ENCODE measurements at regions of chr1 and their contacts with region 1.

Region 1: DNA sequence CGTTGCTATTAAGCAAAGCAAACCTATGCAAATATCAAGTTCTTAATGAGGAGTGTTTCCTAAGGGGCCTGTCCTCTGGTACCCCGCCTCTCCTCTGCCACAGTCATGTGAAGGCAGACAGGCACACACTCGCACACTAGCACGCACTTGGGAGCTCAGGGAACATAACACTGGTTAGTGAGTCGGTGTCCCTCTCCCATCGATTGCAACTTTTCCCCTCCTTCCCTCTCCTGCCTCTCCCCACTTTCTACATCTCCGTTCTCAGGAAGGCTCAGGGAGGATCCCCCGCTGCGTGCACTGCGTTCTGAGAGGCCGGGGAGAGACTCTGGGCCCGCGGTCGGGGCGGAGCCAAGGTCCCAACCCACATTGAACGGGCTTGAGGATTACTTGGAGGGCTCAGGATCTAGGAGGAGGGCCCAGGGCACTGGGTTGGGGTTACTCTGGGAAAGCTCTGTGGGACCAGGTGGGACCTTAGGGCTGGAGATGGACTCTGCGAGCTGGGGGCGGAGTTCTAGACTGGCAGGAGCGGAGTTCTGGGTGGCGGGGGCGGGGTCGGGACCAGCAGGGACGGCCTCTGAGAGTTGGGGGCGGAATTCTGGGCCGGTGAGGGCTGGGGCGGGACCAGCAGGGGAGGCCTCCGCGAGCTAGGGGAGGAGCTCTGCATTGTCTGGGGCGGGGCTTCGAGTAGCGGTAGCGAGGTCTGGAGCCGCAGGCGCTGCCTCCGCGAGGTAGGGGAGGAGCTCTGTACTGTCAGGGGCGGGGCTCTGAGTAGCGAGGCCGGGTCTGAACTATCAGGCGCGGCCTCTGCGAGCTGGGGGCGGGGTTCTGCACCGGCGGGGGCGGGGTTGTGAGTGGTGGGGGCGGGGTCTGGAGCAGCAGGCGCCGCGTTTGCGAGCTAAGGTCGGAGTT is 533 bp upstream of the LEPR start:
- DNase-seq: peak; percentile 98 to 99 (median 99)
- ATAC-seq: peak; percentile 97 to 99 (median 98)
- H3K4me3 ChIP-seq: peak overlapping the region; percentile 36 to 98 (median 80)
- H3K27ac ChIP-seq: peak overlapping the region; percentile 92 to 99 (median 97)
- H3K4me1 ChIP-seq: peaks cover 0 to 45% (median 27%) of the 10 kb centered on the region in 12 donors
- H3K27me3 ChIP-seq: no peaks in the 10 kb centered on the region
- CTCF ChIP-seq: no peak
- POLR2A ChIP-seq: peak in 1 of 2 donors; percentile 38

Region 2: DNA sequence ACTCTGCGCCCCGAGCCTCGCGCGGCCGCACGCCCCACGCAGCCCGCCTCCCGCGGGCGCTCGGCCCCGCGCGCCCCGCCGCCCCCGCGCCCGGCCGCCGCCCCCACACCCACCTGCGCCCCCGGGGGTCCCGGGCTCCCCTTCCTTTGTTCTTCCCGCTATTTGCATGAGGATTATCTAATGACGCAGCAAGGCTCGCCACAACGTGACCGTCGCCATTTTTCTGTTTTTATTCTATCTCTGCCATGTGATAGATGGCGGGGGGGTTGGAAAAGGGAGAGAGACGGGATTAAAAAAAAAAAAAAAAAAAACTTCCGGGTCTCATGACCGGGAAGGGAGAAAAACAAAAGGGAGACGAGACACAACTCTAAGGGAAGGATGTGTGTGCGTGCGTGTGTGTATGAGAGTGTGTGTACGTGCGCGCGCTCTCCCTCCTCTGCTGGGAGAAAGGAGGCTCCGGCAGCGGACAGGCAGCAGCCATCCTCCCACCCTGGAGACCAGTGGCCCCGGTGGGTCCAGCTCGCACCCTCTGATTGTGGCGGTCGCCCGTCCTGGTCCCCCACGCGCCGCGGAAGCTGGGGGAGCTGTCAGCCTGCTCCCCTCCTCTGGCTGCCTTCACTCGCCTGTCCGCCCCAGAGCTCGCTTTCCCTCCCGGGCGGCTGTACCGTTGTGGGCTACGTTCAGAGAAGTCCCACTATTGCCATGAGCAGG is 352.3 kb before region 1 on chr1:
- intact Hi-C with region 1: loop called in 7 of 10 experiments (anchors 5 to 10 kb)
- DNase-seq: peak; percentile 72 to 85 (median 81)
- ATAC-seq: peak; percentile 45 to 63 (median 58)
- H3K4me3 ChIP-seq: peak overlapping the region; percentile 71 to 98 (median 88)
- H3K27ac ChIP-seq: peak overlapping the region; percentile 95 to 100 (median 99)
- H3K4me1 ChIP-seq: peaks cover 0 to 43% (median 31%) of the 10 kb centered on the region in 12 donors
- H3K27me3 ChIP-seq: no peaks in the 10 kb centered on the region
- CTCF ChIP-seq: no peak
- POLR2A ChIP-seq: peak in 1 of 2 donors; percentile 65

Region 3: GRCh38 chr1:65235867-65236805 is 183.8 kb before region 1 on chr1:
- intact Hi-C with region 1: loop called in 1 of 10 experiments (anchors 10 kb)
- DNase-seq: no peak
- ATAC-seq: no peak
- H3K4me3 ChIP-seq: no peak overlapping the region
- H3K27ac ChIP-seq: no peak overlapping the region
- H3K4me1 ChIP-seq: peaks cover 0 to 12% (median 0%) of the 10 kb centered on the region in 12 donors
- H3K27me3 ChIP-seq: no peaks in the 10 kb centered on the region
- CTCF ChIP-seq: peak; percentile 42 to 70 (median 57)
- POLR2A ChIP-seq: no peak

Region 4: DNA sequence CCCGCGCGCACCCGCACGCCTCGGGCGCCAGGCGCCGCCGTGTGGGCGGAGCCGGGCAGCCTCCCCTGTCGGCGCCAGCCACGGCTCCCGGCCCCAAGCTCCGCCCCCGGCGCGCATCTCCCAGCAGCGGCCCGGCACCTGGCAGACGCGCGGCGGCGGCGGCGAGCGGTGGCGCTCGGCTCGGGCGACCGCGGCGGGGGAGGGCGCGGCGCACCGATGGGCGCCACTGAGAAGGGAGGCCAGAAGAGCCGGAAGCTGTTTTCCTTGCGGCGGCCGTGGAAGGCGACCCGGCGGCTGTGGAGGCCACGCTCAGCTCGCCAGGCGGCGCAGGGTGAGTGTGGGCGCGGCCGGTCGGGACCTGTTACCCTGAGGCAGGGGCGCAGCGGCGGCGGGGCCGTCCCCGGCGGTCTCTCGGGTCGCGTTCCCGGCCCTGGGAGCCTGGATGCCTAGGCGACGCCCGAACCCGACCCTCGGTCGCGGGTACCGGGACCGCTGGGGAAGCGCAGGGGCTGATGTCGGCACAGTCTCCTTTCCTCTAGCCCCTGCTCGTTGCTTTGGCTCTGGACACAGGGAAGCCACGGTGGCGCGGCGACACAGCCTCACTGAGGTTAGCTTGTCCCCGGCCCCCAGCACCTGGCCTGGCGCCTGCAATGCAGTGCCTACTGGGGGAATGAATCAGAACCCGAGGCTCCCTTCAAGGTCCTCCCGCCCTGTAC is 165.5 kb before region 1 on chr1:
- intact Hi-C with region 1: loop called in 5 of 10 experiments (anchors 5 to 10 kb)
- DNase-seq: peak; percentile 75 to 90 (median 83)
- ATAC-seq: peak; percentile 63 to 97 (median 92)
- H3K4me3 ChIP-seq: peak overlapping the region; percentile 69 to 99 (median 80)
- H3K27ac ChIP-seq: peak overlapping the region in 9 of 12 donors; percentile 24 to 82 (median 65)
- H3K4me1 ChIP-seq: peaks cover 0 to 28% (median 10%) of the 10 kb centered on the region in 12 donors
- H3K27me3 ChIP-seq: peaks cover 0 to 15% (median 0%) of the 10 kb centered on the region in 9 donors
- CTCF ChIP-seq: peak in 6 of 12 donors; percentile 18 to 50 (median 27)
- POLR2A ChIP-seq: no peak

Region 5: DNA sequence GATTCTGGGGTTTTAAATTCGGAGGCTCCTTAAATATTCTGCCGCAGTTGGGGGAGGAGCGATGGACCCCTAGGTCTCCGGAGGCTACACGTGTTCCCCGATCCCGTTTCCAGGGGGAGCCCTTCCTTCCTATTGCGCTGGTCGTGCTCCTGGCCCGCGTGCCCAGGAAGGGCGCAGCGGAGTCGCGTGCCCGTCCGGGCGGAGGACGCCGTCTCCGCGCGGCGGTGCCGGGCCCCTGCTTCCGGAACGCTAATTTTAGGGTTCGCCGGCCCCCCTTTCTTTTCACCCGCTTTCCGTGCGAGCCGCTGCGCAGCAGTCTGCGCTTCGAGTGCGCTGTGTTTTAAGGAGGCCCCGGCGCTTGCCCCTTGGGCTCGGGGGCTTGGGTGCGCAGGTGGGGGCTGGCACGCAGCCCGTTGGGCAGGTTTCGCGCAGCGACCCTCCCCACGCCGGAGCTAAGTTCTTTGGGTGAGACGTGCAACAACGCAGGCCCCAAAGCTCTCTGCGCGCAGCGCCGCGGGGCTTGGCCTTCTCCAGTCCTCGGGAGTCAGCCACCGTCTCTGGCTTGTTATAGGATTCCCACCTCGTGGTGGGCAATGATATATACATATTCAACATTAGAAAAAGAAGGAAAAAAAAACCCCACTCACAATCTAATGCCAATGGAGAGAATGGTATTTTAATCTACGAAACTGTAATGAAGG is 154.1 kb before region 1 on chr1:
- intact Hi-C with region 1: loop called in 2 of 10 experiments (anchors 10 kb)
- DNase-seq: peak; percentile 43 to 66 (median 55)
- ATAC-seq: peak; percentile 75 to 96 (median 93)
- H3K4me3 ChIP-seq: peak overlapping the region; percentile 39 to 74 (median 61)
- H3K27ac ChIP-seq: peak overlapping the region in 10 of 12 donors; percentile 22 to 78 (median 58)
- H3K4me1 ChIP-seq: peaks cover 0 to 23% (median 11%) of the 10 kb centered on the region in 12 donors
- H3K27me3 ChIP-seq: peaks cover 0 to 20% (median 0%) of the 10 kb centered on the region in 9 donors
- CTCF ChIP-seq: peak in 11 of 12 donors; percentile 8 to 52 (median 27)
- POLR2A ChIP-seq: no peak

Region 6: DNA sequence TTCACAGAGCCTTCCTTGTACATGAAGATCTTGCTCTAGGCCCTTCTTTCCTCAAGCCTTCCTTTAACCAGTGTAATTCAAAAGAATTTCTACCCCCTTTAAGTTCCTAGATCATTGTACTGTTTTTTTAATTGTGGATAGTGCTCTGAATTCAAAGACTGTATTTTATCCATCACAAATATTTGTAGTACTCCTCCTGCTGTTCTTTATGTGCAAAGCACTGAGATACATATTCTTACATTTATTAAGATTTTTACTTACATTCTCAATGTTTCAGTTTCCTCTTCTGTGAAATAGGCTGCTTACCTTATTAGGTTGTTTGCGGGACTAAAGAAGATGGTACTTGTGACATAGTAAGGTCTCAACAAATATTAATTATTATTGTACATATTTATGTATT is 204.0 kb after region 1 on chr1:
- intact Hi-C with region 1: no loop called
- DNase-seq: no peak
- ATAC-seq: no peak
- H3K4me3 ChIP-seq: no peak overlapping the region
- H3K27ac ChIP-seq: no peak overlapping the region
- H3K4me1 ChIP-seq: no peaks in the 10 kb centered on the region
- H3K27me3 ChIP-seq: no peaks in the 10 kb centered on the region
- CTCF ChIP-seq: no peak
- POLR2A ChIP-seq: no peak